Panc1 (cell line): ENCODE measurements at regions of chr15 and their contacts with region 1.

Region 1: GRCh38 chr15:75712668-75713337 is at the start of gene CSPG4:
- DNase-seq: no peak
- ATAC-seq: peak; percentile 84
- H3K4me3 ChIP-seq: peak within 1 kb of the TSS; percentile 51 to 55
- H3K27ac ChIP-seq: peak within 1 kb of the TSS; percentile 79
- H3K4me1 ChIP-seq: peaks cover 9% of the 10 kb centered on the region
- H3K27me3 ChIP-seq: no peaks in the 10 kb centered on the region
- CTCF ChIP-seq: no peak
- total RNA-seq, gene CSPG4: 17.5 TPM

Region 2: DNA sequence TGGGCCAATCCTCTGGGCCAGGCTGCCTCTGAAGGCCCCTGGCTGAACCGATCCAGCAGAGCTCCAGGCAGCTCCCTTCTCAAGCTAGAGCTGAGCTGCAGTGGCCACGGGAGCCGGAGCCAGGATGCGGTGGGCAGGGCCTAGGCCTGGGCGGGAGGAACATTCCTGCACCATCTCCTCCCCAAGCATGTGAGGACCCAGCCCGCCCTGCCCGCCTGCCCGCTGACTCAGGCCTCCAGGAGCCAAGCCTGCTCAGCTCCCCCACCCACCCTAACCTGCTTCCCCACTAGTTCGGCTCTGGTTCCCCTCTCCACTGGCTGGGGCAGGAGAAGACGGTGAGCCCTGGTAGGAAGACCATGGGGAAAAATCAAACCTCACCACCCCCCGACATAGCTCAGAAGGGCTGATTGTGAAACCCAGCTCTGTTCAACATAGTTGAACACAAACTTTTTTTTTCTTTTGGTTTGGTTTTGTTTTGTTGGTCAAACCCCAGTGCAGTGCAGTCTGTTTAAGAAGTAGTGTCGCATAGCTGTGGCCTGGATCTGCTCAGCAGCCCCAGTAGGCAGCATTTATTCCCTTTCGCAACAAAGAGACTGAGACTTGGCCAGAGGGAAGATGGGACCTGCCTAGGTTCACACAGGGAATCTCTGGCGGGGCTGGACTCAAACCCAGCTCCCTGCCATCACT is 51.6 kb before region 1 on chr15:
- CTCF ChIA-PET with region 1: no interaction called
- POLR2A ChIA-PET with region 1: interaction called, 11 read pairs
- in situ Hi-C with region 1: no loop called
- intact Hi-C with region 1: no loop called
- DNase-seq: no peak
- ATAC-seq: peak; percentile 51
- H3K4me3 ChIP-seq: no peak overlapping the region
- H3K27ac ChIP-seq: no peak overlapping the region
- H3K4me1 ChIP-seq: peaks cover 9% of the 10 kb centered on the region
- H3K27me3 ChIP-seq: no peaks in the 10 kb centered on the region
- CTCF ChIP-seq: no peak